ENCODE measurements at regions of chr9 and their contacts with region 1.

Region 1: DNA sequence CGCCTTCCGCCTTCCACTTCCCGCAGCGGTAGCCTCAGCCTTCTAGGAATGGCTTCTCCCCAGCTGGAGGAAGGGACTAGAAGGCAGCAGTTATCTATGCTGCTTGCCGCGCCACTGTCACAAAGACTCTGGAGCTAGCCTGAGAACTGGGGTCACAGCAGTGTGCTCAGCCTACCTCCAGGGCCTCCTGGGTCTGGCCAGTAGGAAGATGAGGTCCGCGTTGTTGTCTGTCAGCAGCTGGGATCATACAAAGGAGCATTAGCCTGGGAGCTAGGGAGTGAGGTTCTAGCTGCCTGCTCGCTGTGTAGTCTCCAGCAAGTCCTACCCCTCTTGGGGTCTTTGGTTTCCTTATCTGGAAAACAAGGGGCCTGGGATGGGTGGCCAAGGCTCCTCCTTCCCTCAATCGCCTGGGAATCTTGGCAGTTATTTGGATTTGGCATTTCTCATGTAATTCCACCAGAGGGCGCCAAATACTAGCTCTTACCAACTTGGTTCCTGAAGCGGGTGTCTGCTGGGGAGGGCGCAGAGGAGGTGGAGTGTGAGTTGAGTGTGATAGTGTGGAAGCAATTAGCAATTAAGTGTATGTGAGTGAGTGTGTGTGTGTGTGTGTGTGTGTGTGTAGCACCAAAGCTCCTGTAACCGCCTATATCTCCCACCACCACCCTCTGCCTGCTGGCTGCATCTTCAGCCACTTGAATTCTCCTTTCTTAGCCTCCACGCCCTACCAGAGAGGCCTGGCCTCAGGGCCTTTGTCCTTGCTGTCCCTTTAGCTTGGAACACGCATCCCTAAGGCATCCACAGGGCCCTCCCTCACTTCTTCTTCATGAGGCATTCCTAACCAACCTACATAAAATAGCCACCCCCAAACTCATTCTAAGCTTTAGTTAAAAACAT is 97.1 kb downstream of the ENTREP1 start:
- DNase-seq: peak; percentile 66
- H3K4me3 ChIP-seq: no peak overlapping the region
- H3K27ac ChIP-seq: no peak overlapping the region
- H3K4me1 ChIP-seq: no peaks in the 10 kb centered on the region
- H3K27me3 ChIP-seq: peaks cover 2% of the 10 kb centered on the region in 2 experiments
- CTCF ChIP-seq: peak; percentile 58 to 66
- POLR2A ChIP-seq: no peak

Region 2: DNA sequence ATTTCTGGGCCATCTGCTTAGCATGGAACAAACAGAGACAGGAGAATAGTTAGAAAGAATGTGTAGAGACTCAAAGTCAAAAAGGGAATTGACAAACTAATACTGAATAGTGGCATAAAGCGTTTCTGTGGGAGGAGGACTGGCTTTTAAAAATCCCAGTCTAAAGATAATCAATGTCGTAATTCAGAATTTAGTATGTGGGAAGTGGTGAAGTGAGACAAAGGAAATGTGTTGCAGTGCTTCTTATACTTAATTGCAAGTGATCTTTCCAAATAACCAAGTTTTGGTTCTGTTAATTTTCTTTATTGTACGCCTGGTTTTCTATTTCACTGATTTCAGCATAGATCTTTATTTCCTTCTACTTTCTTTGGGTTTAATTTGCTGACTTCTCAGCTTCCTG is 36.0 kb after region 1 on chr9:
- CTCF ChIA-PET with region 1: interaction called, 12 read pairs
- POLR2A ChIA-PET with region 1: no interaction called
- dilution Hi-C with region 1: no loop called
- intact Hi-C with region 1: no loop called
- DNase-seq: no peak
- H3K4me3 ChIP-seq: no peak overlapping the region
- H3K27ac ChIP-seq: no peak overlapping the region
- H3K4me1 ChIP-seq: no peaks in the 10 kb centered on the region
- H3K27me3 ChIP-seq: no peaks in the 10 kb centered on the region
- CTCF ChIP-seq: no peak
- POLR2A ChIP-seq: no peak

Region 3: GRCh38 chr9:69471433-69471832 is 49.3 kb after region 1 on chr9:
- CTCF ChIA-PET with region 1: interaction called, 11 read pairs
- POLR2A ChIA-PET with region 1: no interaction called
- dilution Hi-C with region 1: no loop called
- intact Hi-C with region 1: no loop called
- DNase-seq: peak; percentile 85
- H3K4me3 ChIP-seq: no peak overlapping the region
- H3K27ac ChIP-seq: no peak overlapping the region
- H3K4me1 ChIP-seq: peaks cover 12% of the 10 kb centered on the region
- H3K27me3 ChIP-seq: no peaks in the 10 kb centered on the region
- CTCF ChIP-seq: no peak
- POLR2A ChIP-seq: no peak

Region 4: GRCh38 chr9:69532396-69532795 is 110.2 kb after region 1 on chr9:
- CTCF ChIA-PET with region 1: interaction called, 21 read pairs
- POLR2A ChIA-PET with region 1: no interaction called
- dilution Hi-C with region 1: no loop called
- intact Hi-C with region 1: no loop called
- DNase-seq: no peak
- H3K4me3 ChIP-seq: no peak overlapping the region
- H3K27ac ChIP-seq: no peak overlapping the region
- H3K4me1 ChIP-seq: peaks cover 8% of the 10 kb centered on the region
- H3K27me3 ChIP-seq: peaks cover 0 to 7% of the 10 kb centered on the region in 2 experiments
- CTCF ChIP-seq: no peak
- POLR2A ChIP-seq: no peak

Region 5: DNA sequence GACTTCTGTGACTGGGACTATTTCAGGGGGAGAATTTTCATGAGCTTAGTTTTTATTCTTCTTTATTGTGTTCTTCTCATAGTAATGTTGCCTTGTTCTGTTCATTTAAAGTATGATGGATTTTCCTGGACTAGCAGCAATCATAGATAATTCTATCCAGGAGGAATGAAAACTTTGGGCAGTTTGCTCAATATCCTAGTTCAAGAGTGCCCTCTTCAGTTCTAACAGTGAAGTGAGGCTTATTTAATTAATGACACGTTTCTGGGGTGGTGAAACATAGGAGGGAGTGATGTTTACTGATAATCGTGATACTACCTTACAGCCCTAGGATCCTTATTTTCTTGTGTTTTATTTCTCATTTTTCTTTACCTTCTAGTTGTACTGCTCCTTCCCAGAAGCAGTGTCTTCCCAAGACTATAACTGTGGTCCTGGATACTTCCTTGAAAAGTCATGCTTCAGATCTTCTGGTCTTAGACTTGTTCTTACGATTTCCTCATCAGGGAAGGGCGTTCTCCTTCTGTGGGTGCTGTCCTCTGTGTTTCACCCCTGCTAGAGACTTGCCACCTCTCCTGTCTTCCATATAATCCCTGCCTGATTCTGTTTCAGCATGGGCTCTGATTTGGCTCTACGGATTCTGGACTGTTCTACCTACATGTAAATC is 455.8 kb after region 1 on chr9:
- CTCF ChIA-PET with region 1: interaction called, 11 read pairs
- POLR2A ChIA-PET with region 1: no interaction called
- dilution Hi-C with region 1: no loop called
- intact Hi-C with region 1: loop called (anchors 2 kb)
- DNase-seq: peak; percentile 53
- H3K4me3 ChIP-seq: no peak overlapping the region
- H3K27ac ChIP-seq: no peak overlapping the region
- H3K4me1 ChIP-seq: peaks cover 14% of the 10 kb centered on the region
- H3K27me3 ChIP-seq: peaks cover 3 to 9% of the 10 kb centered on the region in 2 experiments
- CTCF ChIP-seq: peak; percentile 27 to 30
- POLR2A ChIP-seq: no peak

Region 6: GRCh38 chr9:69932901-69933300 is 510.7 kb after region 1 on chr9:
- CTCF ChIA-PET with region 1: interaction called, 50 read pairs
- POLR2A ChIA-PET with region 1: no interaction called
- dilution Hi-C with region 1: no loop called
- intact Hi-C with region 1: loop called (anchors 2 kb)
- DNase-seq: peak; percentile 44
- H3K4me3 ChIP-seq: no peak overlapping the region
- H3K27ac ChIP-seq: no peak overlapping the region
- H3K4me1 ChIP-seq: no peaks in the 10 kb centered on the region
- H3K27me3 ChIP-seq: peaks cover 4% of the 10 kb centered on the region in 2 experiments
- CTCF ChIP-seq: peak; percentile 28 to 48
- POLR2A ChIP-seq: no peak

Measured in endothelial cell of umbilical vein (primary cell).